Right cardiac atrium (tissue), 5 donors: ENCODE measurements at regions of chr7 and their contacts with region 1.

Region 1: GRCh38 chr7:44368885-44369284 is 43.5 kb upstream of the CAMK2B start:
- DNase-seq: no peak
- ATAC-seq: no peak
- H3K4me3 ChIP-seq: no peak overlapping the region
- H3K27ac ChIP-seq: no peak overlapping the region
- H3K4me1 ChIP-seq: no peaks in the 10 kb centered on the region
- H3K27me3 ChIP-seq: no peaks in the 10 kb centered on the region

Region 2: DNA sequence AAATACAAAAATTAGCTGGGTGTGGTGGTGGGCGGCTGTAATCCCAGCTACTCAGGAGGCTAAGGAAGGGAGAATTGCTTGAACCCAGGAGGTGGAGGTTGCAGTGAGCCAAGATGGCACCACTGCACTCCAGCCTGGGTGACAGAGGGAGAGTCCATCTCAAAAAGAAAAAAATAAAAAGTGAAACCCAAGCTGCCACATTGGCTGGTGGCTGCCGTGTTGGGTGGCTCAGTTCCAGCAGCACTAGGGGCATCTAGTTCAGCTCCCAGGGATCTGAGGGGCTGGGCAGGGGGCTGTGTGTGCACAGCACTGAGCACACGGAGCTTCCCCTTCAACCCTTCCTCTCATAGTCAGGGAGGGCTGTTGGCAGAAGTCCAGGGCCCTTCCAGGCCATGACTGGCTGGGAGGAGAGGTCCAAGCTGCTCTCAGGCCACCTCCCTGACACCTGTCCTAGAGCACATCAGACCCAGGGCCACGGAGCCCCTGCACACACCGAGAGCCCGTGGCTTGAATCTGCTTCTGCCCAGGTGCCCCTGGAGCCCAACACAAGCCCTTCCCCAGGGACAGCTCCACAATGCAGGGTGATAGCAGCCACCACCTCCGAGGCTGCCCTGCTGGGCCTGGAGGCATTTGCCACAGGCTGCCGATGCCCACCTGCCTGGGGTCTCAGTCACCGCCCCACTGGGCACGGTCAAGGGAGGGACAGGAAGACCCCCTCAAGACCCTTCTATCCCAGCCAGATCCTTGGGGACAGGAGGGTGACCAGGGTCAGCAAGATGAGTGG is 120.8 kb before region 1 on chr7:
- intact Hi-C with region 1: no loop called
- DNase-seq: no peak
- ATAC-seq: no peak
- H3K4me3 ChIP-seq: no peak overlapping the region
- H3K27ac ChIP-seq: no peak overlapping the region
- H3K4me1 ChIP-seq: no peaks in the 10 kb centered on the region
- H3K27me3 ChIP-seq: no peaks in the 10 kb centered on the region

Region 3: GRCh38 chr7:44325811-44326241 is 43.1 kb before region 1 on chr7:
- intact Hi-C with region 1: loop called in 1 of 4 experiments (anchors 2 kb)
- DNase-seq: peak in 1 of 3 donors; percentile 57
- ATAC-seq: peak; percentile 21 to 30
- H3K4me3 ChIP-seq: peak overlapping the region; percentile 57
- H3K27ac ChIP-seq: peak overlapping the region; percentile 5
- H3K4me1 ChIP-seq: no peaks in the 10 kb centered on the region
- H3K27me3 ChIP-seq: no peaks in the 10 kb centered on the region